Ascending aorta (tissue), 2 donors: ENCODE measurements at regions of chr12 and their contacts with region 1.

Region 1: GRCh38 chr12:97760601-97761000 is 298.0 kb downstream of the RMST start:
- DNase-seq: no peak
- H3K4me3 ChIP-seq: no peak overlapping the region
- H3K27ac ChIP-seq: peak overlapping the region in 1 of 2 donors; percentile 52
- H3K4me1 ChIP-seq: peaks cover 0 to 2% of the 10 kb centered on the region in 2 donors
- H3K27me3 ChIP-seq: no peaks in the 10 kb centered on the region
- CTCF ChIP-seq: no peak

Region 2: GRCh38 chr12:97921979-97922722 is 161.6 kb after region 1 on chr12:
- intact Hi-C with region 1: loop called (anchors 10 kb)
- DNase-seq: peak in 1 of 2 donors; percentile 63
- H3K4me3 ChIP-seq: no peak overlapping the region
- H3K27ac ChIP-seq: peak overlapping the region in 1 of 2 donors; percentile 64
- H3K4me1 ChIP-seq: no peaks in the 10 kb centered on the region
- H3K27me3 ChIP-seq: peaks cover 4% of the 10 kb centered on the region
- CTCF ChIP-seq: no peak

Region 3: DNA sequence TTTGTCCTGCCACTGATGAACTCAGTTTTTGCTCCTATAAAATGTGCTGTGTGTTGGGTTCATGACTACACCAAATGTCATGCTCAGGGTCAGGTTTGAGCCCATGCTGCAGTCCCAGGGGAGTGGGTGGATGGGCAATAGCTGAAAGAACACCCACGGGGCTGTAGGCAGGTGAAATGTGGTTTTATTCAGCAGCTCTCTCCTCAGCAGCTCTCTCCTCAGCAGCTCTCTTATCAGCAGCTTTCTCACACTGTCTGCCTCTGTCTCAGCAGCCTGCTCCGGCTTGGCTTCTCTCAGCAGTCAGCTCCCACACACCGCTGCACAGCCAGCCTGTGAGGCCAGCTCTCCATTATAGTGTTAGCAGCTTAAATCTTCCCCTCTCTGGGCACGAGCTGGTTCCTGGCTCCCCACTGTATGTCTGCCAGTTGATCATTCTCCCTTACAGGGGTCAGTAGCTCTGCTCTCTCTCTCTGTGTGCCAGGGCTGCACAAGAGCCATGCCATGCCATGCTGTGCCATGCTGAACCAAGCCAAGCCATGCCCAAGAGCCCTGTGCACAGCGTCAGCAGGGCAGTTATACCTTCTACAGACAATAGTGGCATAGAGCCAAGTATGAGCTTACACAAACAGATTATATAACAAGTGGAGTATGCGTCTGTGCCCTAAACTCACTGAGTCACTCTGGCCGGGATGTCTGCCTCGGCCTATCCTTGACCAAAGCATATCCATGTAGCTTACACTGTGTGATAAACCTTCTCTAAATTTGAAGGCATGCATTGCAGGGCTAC is 451.5 kb after region 1 on chr12:
- intact Hi-C with region 1: no loop called
- DNase-seq: no peak
- H3K4me3 ChIP-seq: no peak overlapping the region
- H3K27ac ChIP-seq: no peak overlapping the region
- H3K4me1 ChIP-seq: no peaks in the 10 kb centered on the region
- H3K27me3 ChIP-seq: no peaks in the 10 kb centered on the region
- CTCF ChIP-seq: no peak